Transverse colon (tissue), 4 donors: ENCODE measurements at regions of chr12 and their contacts with region 1.

Region 1: DNA sequence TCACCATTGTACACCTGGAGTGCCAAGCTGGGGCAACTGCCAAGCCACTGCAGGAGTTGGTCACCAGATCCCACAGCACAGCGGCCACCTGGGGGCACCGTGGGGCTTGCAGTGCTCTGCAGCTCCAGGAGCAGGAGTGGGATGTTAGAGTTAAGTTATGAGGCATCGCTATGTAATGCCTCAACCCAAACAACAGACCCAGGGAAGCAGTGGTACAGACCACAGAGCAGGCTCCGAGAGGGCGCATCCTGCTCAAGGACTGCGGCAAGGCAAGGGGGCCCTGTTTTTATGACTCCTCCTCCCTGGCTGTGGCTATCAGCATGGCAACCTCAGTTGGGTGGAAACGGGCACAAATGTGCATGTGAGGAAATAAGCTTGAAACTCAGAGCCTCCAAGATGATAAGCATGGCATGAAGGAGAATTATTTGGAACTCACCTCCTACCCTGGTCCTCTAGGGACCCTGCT is 63.1 kb downstream of the ARL6IP4 start:
- DNase-seq: peak; percentile 86
- H3K4me3 ChIP-seq: no peak overlapping the region
- H3K27ac ChIP-seq: peak overlapping the region; percentile 68 to 78 (median 73)
- H3K4me1 ChIP-seq: peaks cover 11 to 32% (median 19%) of the 10 kb centered on the region in 4 donors
- H3K27me3 ChIP-seq: no peaks in the 10 kb centered on the region
- CTCF ChIP-seq: peak; percentile 54 to 77 (median 67)
- EP300 ChIP-seq: no peak
- POLR2A ChIP-seq: no peak

Region 2: GRCh38 chr12:122526683-122527477 is 516.7 kb before region 1 on chr12 and contains the starts of genes KNTC1 and RSRC2:
- in situ Hi-C with region 1: no loop called
- intact Hi-C with region 1: no loop called
- DNase-seq: peak; percentile 99
- H3K4me3 ChIP-seq: peak within 1 kb of the TSS; percentile 35 to 95 (median 78)
- H3K27ac ChIP-seq: peak within 1 kb of the TSS; percentile 90 to 99 (median 96)
- H3K4me1 ChIP-seq: peaks cover 27 to 50% (median 40%) of the 10 kb centered on the region in 4 donors
- H3K27me3 ChIP-seq: no peaks in the 10 kb centered on the region
- CTCF ChIP-seq: no peak
- EP300 ChIP-seq: no peak
- POLR2A ChIP-seq: peak; percentile 99
- total RNA-seq, gene KNTC1: 10.6 to 79.4 (median 23.1) TPM
- total RNA-seq, gene RSRC2: 73.4 to 251 (median 99.7) TPM

Region 3: GRCh38 chr12:123141615-123142517 is 98.3 kb after region 1 on chr12:
- in situ Hi-C with region 1: loop called in 2 of 4 experiments (anchors 10 kb)
- intact Hi-C with region 1: no loop called
- DNase-seq: peak; percentile 84
- H3K4me3 ChIP-seq: no peak overlapping the region
- H3K27ac ChIP-seq: peak overlapping the region; percentile 86 to 93 (median 90)
- H3K4me1 ChIP-seq: peaks cover 42 to 51% (median 45%) of the 10 kb centered on the region in 4 donors
- H3K27me3 ChIP-seq: no peaks in the 10 kb centered on the region
- CTCF ChIP-seq: no peak
- EP300 ChIP-seq: no peak
- POLR2A ChIP-seq: peak; percentile 37

Region 4: DNA sequence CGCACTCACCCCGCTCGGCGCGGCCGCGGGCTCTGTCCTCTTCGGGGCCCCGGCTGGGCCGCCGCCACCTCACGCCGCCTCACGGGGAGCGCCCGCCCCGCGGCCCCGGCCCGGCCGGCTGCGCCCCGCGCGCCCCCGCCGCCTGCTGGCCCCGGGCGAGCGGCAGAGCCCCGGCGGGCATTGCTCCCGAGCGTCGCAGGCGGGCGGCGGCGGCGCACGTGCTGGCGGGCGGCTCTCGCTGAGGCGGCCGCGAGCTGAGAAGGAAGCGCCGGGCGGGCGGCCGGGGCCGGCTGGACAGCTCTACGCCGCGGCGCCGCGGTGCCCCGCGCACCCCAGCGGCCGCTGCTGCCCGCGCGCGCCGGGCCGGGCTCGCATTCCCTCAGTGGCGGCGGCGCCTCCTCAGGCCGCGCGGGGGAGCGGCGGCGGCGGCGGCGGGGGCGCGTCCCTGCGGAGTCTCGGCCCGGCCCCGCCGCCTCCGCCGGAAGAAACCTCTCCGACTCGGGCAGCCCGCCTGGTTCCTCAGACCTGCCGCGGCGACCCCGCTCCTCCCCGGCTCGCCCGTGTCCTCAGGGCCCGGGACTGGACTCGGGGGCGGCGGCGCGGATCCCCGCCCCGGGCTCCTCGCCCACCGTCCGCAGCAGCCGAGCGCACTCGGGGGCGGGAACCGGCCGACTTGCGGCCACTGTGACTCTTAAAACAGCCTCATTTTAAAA is 107.3 kb after region 1 on chr12 and contains the start of gene PITPNM2:
- in situ Hi-C with region 1: loop called in 2 of 4 experiments (anchors 10 kb)
- intact Hi-C with region 1: loop called (anchors 1 kb)
- DNase-seq: peak; percentile 70
- H3K4me3 ChIP-seq: peak within 1 kb of the TSS; percentile 61 to 86 (median 74)
- H3K27ac ChIP-seq: peak within 1 kb of the TSS; percentile 83 to 95 (median 92)
- H3K4me1 ChIP-seq: peaks cover 5 to 35% (median 26%) of the 10 kb centered on the region in 4 donors
- H3K27me3 ChIP-seq: no peaks in the 10 kb centered on the region
- CTCF ChIP-seq: peak in 3 of 5 experiments; percentile 14 to 20 (median 19)
- EP300 ChIP-seq: no peak
- POLR2A ChIP-seq: no peak
- total RNA-seq, gene PITPNM2: 10.5 to 19.8 (median 14.3) TPM